ENCODE measurements at regions of chr4 and their contacts with region 1.

Region 1: DNA sequence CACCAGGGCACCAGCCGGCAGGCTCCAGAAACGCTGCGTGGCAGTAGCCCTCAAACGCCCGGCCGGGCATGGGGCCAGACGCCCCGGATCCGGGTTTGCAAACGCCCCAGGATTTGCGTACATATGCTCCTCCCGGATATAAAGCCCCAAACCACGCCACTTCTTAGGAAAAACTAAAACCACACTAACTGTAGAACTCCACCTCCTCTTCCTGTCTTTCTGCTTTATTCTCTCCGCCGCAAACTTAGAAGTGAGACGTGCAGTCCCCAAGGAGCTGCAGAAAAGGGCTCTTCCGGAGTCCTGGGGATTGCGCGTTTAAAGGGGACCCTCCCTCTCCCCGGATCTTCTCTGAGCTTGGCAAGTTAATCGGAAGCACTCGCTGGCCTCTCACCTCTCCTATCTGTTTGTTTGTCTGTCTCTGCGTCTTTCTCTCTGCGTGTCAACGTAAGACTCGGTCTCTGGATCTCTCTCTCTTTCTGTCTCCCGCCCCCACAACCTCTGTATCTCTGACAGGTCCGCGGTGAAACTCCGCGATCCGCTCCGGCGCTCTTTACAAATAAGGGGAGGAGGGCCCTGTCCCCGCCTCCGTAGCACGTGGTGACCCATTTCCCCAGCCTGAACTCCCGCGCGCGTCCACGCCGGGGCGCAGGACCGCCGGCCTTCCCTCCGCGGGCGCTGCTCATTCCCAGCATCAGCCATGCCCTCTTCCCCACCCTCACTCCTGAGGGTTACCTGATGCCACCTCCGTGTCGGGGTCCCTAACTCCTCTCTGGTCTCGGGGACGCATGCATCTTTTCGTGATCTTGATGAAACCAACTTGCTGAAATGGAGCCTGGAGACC is at the start of gene SLC39A8:
- DNase-seq: peak; percentile 67 to 94 (median 84)
- ATAC-seq: peak; percentile 80
- H3K4me3 ChIP-seq: peak within 1 kb of the TSS; percentile 65 to 85
- H3K4me3 Mint-ChIP-seq: peak within 1 kb of the TSS; percentile 92
- H3K27ac ChIP-seq: peak within 1 kb of the TSS; percentile 92 to 96
- H3K27ac Mint-ChIP-seq: peak within 1 kb of the TSS; percentile 96
- H3K4me1 ChIP-seq: peaks cover 33% of the 10 kb centered on the region
- H3K4me1 Mint-ChIP-seq: peaks cover 54% of the 10 kb centered on the region
- H3K27me3 ChIP-seq: no peaks in the 10 kb centered on the region
- H3K27me3 Mint-ChIP-seq: no peaks in the 10 kb centered on the region
- CTCF ChIP-seq: peak; percentile 90
- total RNA-seq, gene SLC39A8: 19.1 to 20.0 TPM

Region 2: DNA sequence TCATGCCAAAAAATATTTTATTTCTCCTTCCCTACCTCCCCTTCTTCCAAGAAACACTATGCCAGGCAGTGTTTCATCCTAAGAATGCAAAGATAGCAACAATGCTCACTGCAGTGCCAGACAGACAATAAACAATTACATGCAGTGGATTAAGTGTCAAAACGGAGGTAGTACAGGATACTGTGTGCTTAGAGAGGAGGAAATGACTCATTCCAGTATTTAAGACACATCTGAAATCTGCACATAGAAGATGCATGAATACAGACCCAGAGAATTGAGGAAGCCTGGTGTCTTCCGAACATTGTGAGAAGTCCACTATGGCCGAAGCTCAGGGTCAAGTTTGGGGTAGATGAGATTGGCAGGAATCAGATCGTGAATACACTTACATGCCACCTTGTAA is 1324.2 kb before region 1 on chr4:
- CTCF ChIA-PET with region 1: no interaction called
- POLR2A ChIA-PET with region 1: no interaction called
- intact Hi-C with region 1: loop called in 1 of 2 experiments (anchors 10 kb)
- DNase-seq: peak in 2 of 9 experiments; percentile 59 to 73
- ATAC-seq: peak; percentile 72
- H3K4me3 ChIP-seq: no peak overlapping the region
- H3K4me3 Mint-ChIP-seq: peak overlapping the region; percentile 47
- H3K27ac ChIP-seq: peak overlapping the region; percentile 15 to 56
- H3K27ac Mint-ChIP-seq: peak overlapping the region; percentile 90
- H3K4me1 ChIP-seq: peaks cover 29% of the 10 kb centered on the region
- H3K4me1 Mint-ChIP-seq: peaks cover 35% of the 10 kb centered on the region
- H3K27me3 ChIP-seq: no peaks in the 10 kb centered on the region
- H3K27me3 Mint-ChIP-seq: no peaks in the 10 kb centered on the region
- CTCF ChIP-seq: no peak

Region 3: DNA sequence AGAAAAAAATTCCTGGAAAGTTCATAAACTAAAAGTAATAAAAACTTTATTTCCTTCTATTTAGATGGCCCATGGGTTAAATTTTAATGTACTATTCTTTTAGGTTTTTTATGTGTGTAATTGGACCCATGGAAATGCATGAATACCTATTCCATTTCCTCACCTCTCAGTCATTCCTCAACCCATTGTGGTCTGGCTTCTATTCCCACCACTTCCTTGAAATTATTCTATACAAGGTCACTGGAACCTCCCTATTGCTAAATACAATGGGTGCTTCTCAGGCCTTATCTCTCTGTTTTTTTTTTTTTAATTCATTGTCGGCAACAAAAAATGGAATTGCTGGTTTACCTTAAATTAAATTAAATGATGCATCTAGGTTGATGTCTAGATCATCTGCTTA is 17.1 kb before region 1 on chr4:
- CTCF ChIA-PET with region 1: no interaction called
- POLR2A ChIA-PET with region 1: no interaction called
- intact Hi-C with region 1: no loop called
- DNase-seq: no peak
- ATAC-seq: no peak
- H3K4me3 ChIP-seq: no peak overlapping the region
- H3K4me3 Mint-ChIP-seq: no peak overlapping the region
- H3K27ac ChIP-seq: no peak overlapping the region
- H3K27ac Mint-ChIP-seq: no peak overlapping the region
- H3K4me1 ChIP-seq: no peaks in the 10 kb centered on the region
- H3K4me1 Mint-ChIP-seq: peaks cover 39% of the 10 kb centered on the region
- H3K27me3 ChIP-seq: no peaks in the 10 kb centered on the region
- H3K27me3 Mint-ChIP-seq: no peaks in the 10 kb centered on the region
- CTCF ChIP-seq: no peak

Region 4: GRCh38 chr4:102430461-102430910 is 85.3 kb after region 1 on chr4:
- CTCF ChIA-PET with region 1: interaction called, 14 read pairs
- POLR2A ChIA-PET with region 1: interaction called, 4 read pairs
- intact Hi-C with region 1: loop called (anchors 1 to 2 kb)
- DNase-seq: peak in 1 of 9 experiments; percentile 19
- ATAC-seq: no peak
- H3K4me3 ChIP-seq: peak overlapping the region; percentile 57 to 58
- H3K4me3 Mint-ChIP-seq: peak overlapping the region; percentile 88
- H3K27ac ChIP-seq: peak overlapping the region; percentile 34 to 55
- H3K27ac Mint-ChIP-seq: no peak overlapping the region
- H3K4me1 ChIP-seq: peaks cover 4% of the 10 kb centered on the region
- H3K4me1 Mint-ChIP-seq: peaks cover 8% of the 10 kb centered on the region
- H3K27me3 ChIP-seq: no peaks in the 10 kb centered on the region
- H3K27me3 Mint-ChIP-seq: no peaks in the 10 kb centered on the region
- CTCF ChIP-seq: no peak

Region 5: DNA sequence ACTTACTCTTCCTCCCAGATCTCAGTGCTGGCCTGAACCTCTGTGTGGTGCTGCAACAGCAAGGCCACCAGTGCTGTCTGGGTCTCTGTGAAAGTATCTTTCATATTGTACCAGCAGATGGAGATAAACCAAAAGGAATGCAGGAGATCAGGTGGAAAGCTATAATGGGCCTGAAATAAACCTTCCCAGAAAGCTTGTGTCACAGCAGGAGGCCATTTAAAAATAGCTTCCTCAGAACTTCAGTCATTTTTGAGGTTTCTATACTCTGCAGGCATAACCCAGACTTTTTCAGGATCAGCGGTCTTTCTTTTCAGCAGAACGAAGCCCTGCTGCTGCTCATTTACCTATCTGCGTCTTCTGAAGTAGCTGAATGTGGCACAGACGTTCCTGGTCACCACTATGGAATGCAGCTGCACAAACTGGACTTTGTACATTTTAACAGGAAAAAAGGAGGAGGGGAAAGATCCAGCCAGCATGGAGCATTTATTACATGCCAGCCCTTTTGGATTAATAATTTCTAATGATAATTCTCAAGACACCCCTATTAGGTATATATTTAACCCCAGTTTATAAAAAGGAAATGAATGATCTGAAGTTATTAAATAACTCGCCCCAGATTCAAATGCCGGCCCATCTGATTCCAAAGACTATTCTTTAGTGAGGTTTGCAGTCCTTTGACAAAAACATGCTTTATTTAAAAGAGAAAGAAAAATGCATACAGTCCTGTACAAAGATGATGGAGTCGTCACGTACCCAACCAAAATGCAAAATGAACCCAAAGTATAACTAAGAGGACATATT is 275.7 kb after region 1 on chr4:
- CTCF ChIA-PET with region 1: no interaction called
- POLR2A ChIA-PET with region 1: no interaction called
- intact Hi-C with region 1: loop called (anchors 5 kb)
- DNase-seq: peak in 1 of 9 experiments; percentile 56
- ATAC-seq: peak; percentile 50
- H3K4me3 ChIP-seq: no peak overlapping the region
- H3K4me3 Mint-ChIP-seq: no peak overlapping the region
- H3K27ac ChIP-seq: no peak overlapping the region
- H3K27ac Mint-ChIP-seq: peak overlapping the region; percentile 53
- H3K4me1 ChIP-seq: peaks cover 28% of the 10 kb centered on the region
- H3K4me1 Mint-ChIP-seq: peaks cover 46% of the 10 kb centered on the region
- H3K27me3 ChIP-seq: no peaks in the 10 kb centered on the region
- H3K27me3 Mint-ChIP-seq: no peaks in the 10 kb centered on the region
- CTCF ChIP-seq: peak; percentile 26

Region 6: DNA sequence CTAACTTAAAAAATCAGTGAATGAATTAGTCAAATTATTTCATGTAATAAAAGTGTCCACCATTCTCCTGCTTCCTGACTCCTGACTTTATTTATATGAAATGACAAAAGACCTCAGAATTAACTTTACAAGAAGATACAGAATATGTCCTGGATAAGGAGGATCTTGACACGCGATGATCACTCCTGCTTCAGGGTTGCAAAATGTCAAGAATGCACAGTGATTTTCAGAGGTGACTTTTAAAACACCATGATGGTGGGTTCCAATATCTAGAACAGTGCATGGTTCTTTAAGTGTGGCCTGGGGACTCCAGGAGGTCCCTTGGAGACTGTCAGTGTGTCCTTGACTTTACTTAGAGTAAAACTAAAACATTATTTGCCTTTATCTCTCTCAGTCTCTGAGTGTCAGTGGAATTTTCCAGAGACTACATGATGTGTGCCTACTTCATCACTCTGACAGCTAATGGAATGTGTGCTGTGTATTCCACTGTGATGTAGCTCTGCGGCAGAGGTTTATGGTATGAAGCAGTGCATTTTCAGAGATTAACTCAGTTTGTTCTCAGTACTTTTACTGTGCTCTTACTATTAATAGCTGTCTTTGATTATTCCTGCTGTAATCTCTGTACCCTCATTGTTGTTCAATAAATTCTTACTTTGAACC is 329.8 kb after region 1 on chr4:
- CTCF ChIA-PET with region 1: no interaction called
- POLR2A ChIA-PET with region 1: no interaction called
- intact Hi-C with region 1: no loop called
- DNase-seq: no peak
- ATAC-seq: no peak
- H3K4me3 ChIP-seq: no peak overlapping the region
- H3K4me3 Mint-ChIP-seq: no peak overlapping the region
- H3K27ac ChIP-seq: no peak overlapping the region
- H3K27ac Mint-ChIP-seq: peak overlapping the region; percentile 29
- H3K4me1 ChIP-seq: peaks cover 8% of the 10 kb centered on the region
- H3K4me1 Mint-ChIP-seq: peaks cover 11% of the 10 kb centered on the region
- H3K27me3 ChIP-seq: no peaks in the 10 kb centered on the region
- H3K27me3 Mint-ChIP-seq: no peaks in the 10 kb centered on the region
- CTCF ChIP-seq: no peak

Region 7: GRCh38 chr4:102868781-102869568 is 523.8 kb after region 1 on chr4 and contains the start of gene CISD2:
- CTCF ChIA-PET with region 1: no interaction called
- POLR2A ChIA-PET with region 1: no interaction called
- intact Hi-C with region 1: loop called (anchors 2 kb)
- DNase-seq: peak; percentile 83 to 97 (median 91)
- ATAC-seq: peak; percentile 81
- H3K4me3 ChIP-seq: peak within 1 kb of the TSS; percentile 74 to 77
- H3K4me3 Mint-ChIP-seq: peak within 1 kb of the TSS; percentile 89
- H3K27ac ChIP-seq: peak within 1 kb of the TSS; percentile 89 to 94
- H3K27ac Mint-ChIP-seq: peak within 1 kb of the TSS; percentile 99
- H3K4me1 ChIP-seq: peaks cover 37% of the 10 kb centered on the region
- H3K4me1 Mint-ChIP-seq: peaks cover 66% of the 10 kb centered on the region
- H3K27me3 ChIP-seq: no peaks in the 10 kb centered on the region
- H3K27me3 Mint-ChIP-seq: no peaks in the 10 kb centered on the region
- CTCF ChIP-seq: no peak
- total RNA-seq, gene CISD2: 14.3 to 14.4 TPM

Region 8: DNA sequence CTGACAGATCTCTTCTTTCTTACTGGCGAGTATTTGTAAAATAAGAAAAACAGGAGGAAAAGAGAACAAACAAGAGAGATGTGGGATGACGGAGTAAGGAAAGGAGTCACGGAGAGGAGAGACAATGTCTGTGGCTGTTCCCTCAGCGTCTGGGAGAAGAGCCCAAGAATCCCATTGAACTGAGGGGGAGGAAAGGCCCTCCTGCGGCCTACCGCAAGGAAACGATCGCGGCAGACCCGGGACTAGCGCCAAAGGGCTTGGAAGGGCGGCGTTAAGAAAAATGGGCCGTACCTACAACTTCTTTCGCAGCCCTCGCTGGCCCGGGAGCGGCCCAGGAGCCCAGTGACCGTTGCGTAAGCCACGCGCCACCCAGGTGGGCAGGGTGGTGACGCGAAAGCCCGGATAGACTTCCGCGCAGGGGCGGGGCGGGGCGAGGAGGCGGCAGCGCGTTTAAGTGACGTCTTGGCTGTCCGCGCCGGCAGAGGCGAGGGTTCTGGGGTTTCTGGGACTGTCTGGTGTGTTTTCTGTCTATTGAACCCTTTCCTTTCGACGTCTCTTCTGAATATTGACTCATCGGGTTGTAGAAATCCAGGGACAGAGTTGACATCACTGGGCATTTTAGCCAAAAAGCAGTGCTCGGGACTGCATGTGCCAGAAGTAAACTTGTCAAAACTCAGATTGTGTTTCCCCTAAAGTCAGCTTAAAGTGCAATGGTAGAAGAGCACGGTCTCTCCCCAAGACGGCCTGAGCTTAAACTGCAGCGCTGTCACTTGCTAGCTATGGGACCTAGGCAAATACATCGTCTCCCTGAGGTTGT is 674.3 kb after region 1 on chr4 and contains the start of gene SLC9B1:
- CTCF ChIA-PET with region 1: no interaction called
- POLR2A ChIA-PET with region 1: no interaction called
- intact Hi-C with region 1: loop called (anchors 1 to 2 kb)
- DNase-seq: peak; percentile 86 to 96 (median 94)
- ATAC-seq: peak; percentile 92
- H3K4me3 ChIP-seq: peak within 1 kb of the TSS; percentile 70 to 75
- H3K4me3 Mint-ChIP-seq: peak within 1 kb of the TSS; percentile 87
- H3K27ac ChIP-seq: peak within 1 kb of the TSS; percentile 86 to 87
- H3K27ac Mint-ChIP-seq: peak within 1 kb of the TSS; percentile 97
- H3K4me1 ChIP-seq: peaks cover 17% of the 10 kb centered on the region
- H3K4me1 Mint-ChIP-seq: peaks cover 20% of the 10 kb centered on the region
- H3K27me3 ChIP-seq: no peaks in the 10 kb centered on the region
- H3K27me3 Mint-ChIP-seq: no peaks in the 10 kb centered on the region
- CTCF ChIP-seq: no peak
- total RNA-seq, gene SLC9B1: 1.7 to 4.0 TPM

Region 9: GRCh38 chr4:103099691-103100392 is 754.7 kb after region 1 on chr4 and contains the start of gene BDH2:
- CTCF ChIA-PET with region 1: no interaction called
- POLR2A ChIA-PET with region 1: no interaction called
- intact Hi-C with region 1: loop called (anchors 5 kb)
- DNase-seq: peak in 8 of 9 experiments; percentile 3 to 91 (median 48)
- ATAC-seq: peak; percentile 99
- H3K4me3 ChIP-seq: peak within 1 kb of the TSS; percentile 51 to 60
- H3K4me3 Mint-ChIP-seq: peak within 1 kb of the TSS; percentile 85
- H3K27ac ChIP-seq: peak within 1 kb of the TSS; percentile 4 to 37
- H3K27ac Mint-ChIP-seq: peak within 1 kb of the TSS; percentile 92
- H3K4me1 ChIP-seq: peaks cover 15% of the 10 kb centered on the region
- H3K4me1 Mint-ChIP-seq: peaks cover 41% of the 10 kb centered on the region
- H3K27me3 ChIP-seq: no peaks in the 10 kb centered on the region
- H3K27me3 Mint-ChIP-seq: no peaks in the 10 kb centered on the region
- CTCF ChIP-seq: peak; percentile 78
- total RNA-seq, gene BDH2: 16.4 to 19.9 TPM